K562 (cell line): ENCODE measurements at regions of chr9 and their contacts with region 1.

Region 1: DNA sequence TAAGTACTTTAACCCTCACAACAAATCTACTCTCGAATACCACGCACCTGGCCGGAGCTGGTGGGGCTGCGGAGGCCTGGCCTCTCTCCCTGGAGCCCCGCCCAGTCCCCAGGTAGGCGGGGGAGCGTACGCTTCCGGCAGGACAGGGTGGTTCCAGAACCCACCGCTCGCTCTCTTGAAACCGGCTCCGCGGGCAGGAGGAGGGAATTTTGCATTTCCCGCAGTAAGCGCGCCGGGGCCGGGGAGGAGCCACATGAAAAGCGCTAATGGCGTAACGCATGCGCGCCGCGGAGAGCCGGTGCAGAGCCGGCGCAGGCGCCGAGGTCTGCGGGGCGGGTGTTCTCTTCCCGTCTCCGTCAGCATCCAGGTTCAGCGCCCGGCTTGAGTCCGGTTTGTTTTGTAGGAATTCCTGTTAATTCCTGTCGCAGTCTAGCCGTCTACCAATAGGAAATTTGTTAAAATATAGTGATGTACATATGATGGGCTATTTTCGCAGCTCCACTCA is 20.8 kb downstream of the CAVIN4 start:
- DNase-seq: peak; percentile 66 to 84 (median 74)
- ATAC-seq: peak; percentile 89
- H3K4me3 ChIP-seq: peak overlapping the region; percentile 41
- H3K27ac ChIP-seq: no peak overlapping the region
- H3K4me1 ChIP-seq: peaks cover 6% of the 10 kb centered on the region in 2 experiments; a peak in 3 of 5 replicates
- H3K27me3 ChIP-seq: no peaks in the 10 kb centered on the region
- CTCF ChIP-seq: no peak; a peak in 1 of 6 replicates
- EP300 ChIP-seq: no peak
- POLR2A ChIP-seq: peak; percentile 47; the same call in 1 of the 2 replicates
- RAD21 ChIP-seq: no peak

Region 2: DNA sequence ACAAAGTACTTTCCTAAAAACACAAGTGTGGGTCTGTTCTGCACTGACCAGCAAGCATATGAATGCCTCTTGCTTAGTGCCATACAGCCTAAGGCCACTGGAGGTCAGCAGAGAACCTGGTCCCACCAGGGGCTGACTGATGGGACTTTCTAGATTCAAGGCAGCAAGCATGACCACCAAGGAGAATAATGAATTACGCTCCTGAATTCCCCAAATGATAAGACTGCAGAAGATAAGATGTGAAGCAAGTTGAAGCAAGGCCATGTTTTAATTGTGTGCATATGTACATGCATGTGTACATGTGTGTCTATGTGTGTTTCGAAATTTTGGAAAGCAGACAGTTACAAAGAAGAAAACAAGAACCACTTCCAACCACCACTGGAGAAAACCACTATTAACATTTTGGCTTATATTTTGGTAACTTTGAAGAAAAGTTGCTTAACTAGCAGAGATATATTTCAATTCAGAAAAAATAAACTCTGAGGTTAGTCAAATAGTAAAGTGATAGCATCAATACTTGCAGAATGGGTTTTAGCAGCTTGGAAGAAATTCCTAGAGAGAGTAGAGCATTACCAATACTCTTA is 570.4 kb before region 1 on chr9:
- CTCF ChIA-PET with region 1: no interaction called
- POLR2A ChIA-PET with region 1: no interaction called
- in situ Hi-C with region 1: loop called (anchors 25 kb)
- intact Hi-C with region 1: loop called (anchors 1 kb)
- DNase-seq: peak; percentile 71 to 86 (median 72)
- ATAC-seq: peak; percentile 99
- H3K4me3 ChIP-seq: no peak overlapping the region
- H3K27ac ChIP-seq: no peak overlapping the region
- H3K4me1 ChIP-seq: no peaks in the 10 kb centered on the region
- H3K27me3 ChIP-seq: no peaks in the 10 kb centered on the region
- CTCF ChIP-seq: peak; percentile 89 to 95 (median 95)
- EP300 ChIP-seq: no peak
- POLR2A ChIP-seq: no peak
- RAD21 ChIP-seq: peak; percentile 93 to 96

Region 3: DNA sequence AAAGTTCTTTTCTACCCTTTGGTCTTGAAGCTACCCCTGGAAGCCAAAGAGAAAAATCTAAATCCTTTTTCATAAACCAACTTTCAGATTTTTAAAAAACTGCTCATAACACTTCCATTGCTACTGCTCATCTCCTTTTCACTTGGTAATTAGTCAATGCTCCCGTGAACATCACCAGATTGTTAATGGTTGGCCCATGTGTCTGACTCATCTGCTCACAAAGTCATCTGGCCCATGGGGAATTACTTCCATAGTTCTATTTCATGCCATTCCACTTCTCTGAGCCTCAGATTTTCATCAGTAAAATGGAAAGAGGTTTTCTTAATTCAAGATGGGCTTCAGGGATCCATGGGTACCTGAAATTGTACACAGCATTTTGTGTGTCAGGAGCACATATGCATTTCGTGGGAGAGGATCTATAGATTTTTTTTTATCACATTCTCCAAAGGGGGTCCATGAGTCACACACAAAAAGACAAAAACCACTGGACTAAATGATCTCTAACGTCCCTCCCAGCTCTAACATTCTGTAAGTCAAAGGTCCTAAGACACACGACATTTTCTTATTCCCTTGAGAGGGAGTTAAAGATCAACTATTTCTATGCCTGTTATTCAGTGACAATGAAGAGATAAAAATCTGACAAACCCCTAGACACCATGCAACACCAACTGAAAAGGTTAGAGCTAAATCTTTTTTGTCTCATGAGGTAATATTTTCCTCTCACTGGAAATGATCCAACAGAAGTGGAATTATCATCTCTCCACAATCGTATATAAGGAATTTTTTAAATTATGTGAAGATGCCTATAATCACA is 321.3 kb before region 1 on chr9:
- CTCF ChIA-PET with region 1: no interaction called
- POLR2A ChIA-PET with region 1: no interaction called
- in situ Hi-C with region 1: no loop called
- intact Hi-C with region 1: loop called (anchors 10 kb)
- DNase-seq: peak in 1 of 4 experiments; percentile 13
- ATAC-seq: no peak
- H3K4me3 ChIP-seq: no peak overlapping the region
- H3K27ac ChIP-seq: no peak overlapping the region; the same call in 2 of the 3 replicates
- H3K4me1 ChIP-seq: peaks cover 0 to 23% of the 10 kb centered on the region in 2 experiments; a peak in 4 of 5 replicates
- H3K27me3 ChIP-seq: no peaks in the 10 kb centered on the region
- CTCF ChIP-seq: no peak
- EP300 ChIP-seq: no peak
- POLR2A ChIP-seq: no peak
- RAD21 ChIP-seq: no peak

Region 4: GRCh38 chr9:100426530-100427428 is 171.9 kb before region 1 on chr9 and contains the start of gene MSANTD3:
- CTCF ChIA-PET with region 1: interaction called, 3 read pairs
- POLR2A ChIA-PET with region 1: no interaction called
- in situ Hi-C with region 1: no loop called
- intact Hi-C with region 1: loop called (anchors 5 kb)
- DNase-seq: peak; percentile 82 to 91 (median 90)
- ATAC-seq: peak; percentile 89
- H3K4me3 ChIP-seq: peak within 1 kb of the TSS; percentile 88
- H3K27ac ChIP-seq: peak within 1 kb of the TSS; percentile 99
- H3K4me1 ChIP-seq: peaks cover 7 to 27% of the 10 kb centered on the region in 2 experiments
- H3K27me3 ChIP-seq: no peaks in the 10 kb centered on the region
- CTCF ChIP-seq: peak; percentile 16 to 38 (median 23); a peak in 3 of 6 replicates
- EP300 ChIP-seq: peak; percentile 61; the same call in 1 of the 2 replicates
- POLR2A ChIP-seq: peak; percentile 79
- RAD21 ChIP-seq: no peak; a peak in 2 of 4 replicates
- polyA plus RNA-seq, gene MSANTD3: 9.4 to 9.6 TPM

Region 5: DNA sequence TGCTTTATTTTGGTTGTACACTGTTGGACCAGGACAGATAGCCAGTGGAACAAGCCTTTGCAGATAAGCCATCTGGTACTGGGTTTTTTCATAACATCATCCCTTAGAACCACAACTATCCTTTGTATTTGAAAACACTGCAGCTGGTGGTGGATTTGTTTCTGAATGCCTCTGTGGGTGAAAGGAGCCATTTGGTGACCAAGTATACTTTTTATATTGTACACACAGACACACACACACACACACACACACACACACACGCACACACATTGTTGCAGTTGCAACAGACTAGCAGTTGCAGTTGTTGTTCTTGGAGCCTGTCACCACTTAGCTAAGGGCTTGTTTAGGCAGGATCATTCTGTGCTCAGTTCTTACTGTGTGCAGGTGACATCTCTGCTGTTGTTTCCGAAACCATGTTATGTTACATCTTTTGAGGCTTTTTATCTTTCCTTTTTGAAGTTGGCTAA is 43.7 kb before region 1 on chr9:
- CTCF ChIA-PET with region 1: no interaction called
- POLR2A ChIA-PET with region 1: no interaction called
- in situ Hi-C with region 1: no loop called
- intact Hi-C with region 1: no loop called
- DNase-seq: no peak
- ATAC-seq: no peak
- H3K4me3 ChIP-seq: no peak overlapping the region
- H3K27ac ChIP-seq: no peak overlapping the region
- H3K4me1 ChIP-seq: no peaks in the 10 kb centered on the region
- H3K27me3 ChIP-seq: no peaks in the 10 kb centered on the region
- CTCF ChIP-seq: no peak
- EP300 ChIP-seq: no peak
- POLR2A ChIP-seq: no peak
- RAD21 ChIP-seq: no peak

Region 6: DNA sequence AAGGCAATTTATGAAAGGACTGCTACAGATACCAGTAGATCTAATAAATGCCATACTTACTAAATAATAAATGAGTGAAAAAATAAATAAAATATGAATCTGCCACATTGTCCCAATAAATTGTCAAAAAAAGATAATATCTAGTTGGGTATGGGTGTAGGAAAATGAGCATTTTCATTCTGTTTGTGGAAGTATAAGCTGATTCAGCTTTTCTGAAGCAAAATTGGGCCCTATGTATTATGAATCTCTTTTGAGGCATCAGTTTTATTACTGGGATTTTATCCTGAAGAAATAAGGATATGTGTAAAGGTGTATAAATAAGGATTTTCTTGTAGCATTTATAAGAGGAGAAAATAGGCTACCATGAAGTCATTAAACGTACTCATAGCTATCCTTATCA is 25.3 kb after region 1 on chr9:
- CTCF ChIA-PET with region 1: no interaction called
- POLR2A ChIA-PET with region 1: no interaction called
- in situ Hi-C with region 1: no loop called
- intact Hi-C with region 1: no loop called
- DNase-seq: no peak
- ATAC-seq: no peak
- H3K4me3 ChIP-seq: no peak overlapping the region
- H3K27ac ChIP-seq: no peak overlapping the region
- H3K4me1 ChIP-seq: no peaks in the 10 kb centered on the region
- H3K27me3 ChIP-seq: no peaks in the 10 kb centered on the region
- CTCF ChIP-seq: no peak
- EP300 ChIP-seq: no peak
- POLR2A ChIP-seq: no peak
- RAD21 ChIP-seq: no peak

Region 7: GRCh38 chr9:101235105-101235866 is 636.6 kb after region 1 on chr9:
- CTCF ChIA-PET with region 1: interaction called, 4 read pairs
- POLR2A ChIA-PET with region 1: no interaction called
- in situ Hi-C with region 1: no loop called
- intact Hi-C with region 1: loop called (anchors 10 kb)
- DNase-seq: peak in 2 of 4 experiments; percentile 17
- ATAC-seq: peak; percentile 71
- H3K4me3 ChIP-seq: no peak overlapping the region
- H3K27ac ChIP-seq: no peak overlapping the region
- H3K4me1 ChIP-seq: no peaks in the 10 kb centered on the region
- H3K27me3 ChIP-seq: no peaks in the 10 kb centered on the region
- CTCF ChIP-seq: peak in 2 of 3 experiments; percentile 23 to 54; a peak in 4 of 6 replicates
- EP300 ChIP-seq: no peak
- POLR2A ChIP-seq: no peak
- RAD21 ChIP-seq: peak; percentile 10 to 47; a peak in 2 of 4 replicates